ENCODE measurements at regions of chr9 and their contacts with region 1.

Region 1: DNA sequence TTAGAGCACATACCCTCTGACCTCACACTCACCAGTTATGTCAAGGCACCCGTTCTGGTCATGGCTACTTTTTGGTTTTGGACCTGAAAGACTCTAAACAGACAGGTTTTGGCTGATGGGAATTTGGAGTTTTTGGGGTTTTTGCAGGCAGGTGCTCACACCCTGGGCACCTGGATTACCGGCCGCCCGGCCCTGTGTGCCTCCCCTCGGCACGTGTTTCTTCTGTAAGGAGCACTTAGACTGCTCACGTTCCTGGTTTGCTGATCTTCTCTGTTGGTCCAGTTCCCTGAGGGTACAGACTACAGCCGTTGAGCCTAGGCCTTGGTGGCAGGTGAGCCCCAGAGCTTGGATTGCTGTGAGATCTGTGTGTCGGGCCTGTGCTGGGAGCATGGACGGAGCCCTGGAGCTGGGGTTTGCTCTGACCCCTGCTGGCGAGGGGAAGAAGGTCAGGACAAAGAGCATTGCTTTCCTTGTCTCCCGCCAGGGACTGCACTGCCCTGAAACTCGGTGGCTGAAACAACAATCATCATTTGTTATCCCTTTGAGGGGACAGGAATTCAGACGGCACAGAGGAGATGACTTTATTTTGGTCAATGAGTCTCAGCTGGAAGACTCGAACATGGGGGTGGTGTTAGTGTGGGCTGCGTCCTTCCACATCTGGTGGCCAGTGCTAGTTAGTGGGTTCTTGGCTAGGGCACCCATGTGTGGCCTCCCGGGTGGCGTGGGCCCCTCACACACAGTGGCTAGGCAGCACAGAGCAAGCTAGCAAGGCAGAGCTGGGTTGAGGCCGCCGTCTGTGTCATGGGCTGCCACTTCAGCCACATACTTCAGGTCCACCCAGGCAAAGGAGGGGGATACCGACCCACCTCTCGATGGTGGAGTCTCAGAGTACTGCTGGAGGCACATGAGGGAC is 76.4 kb downstream of the EHMT1 start:
- DNase-seq: peak; percentile 85
- ATAC-seq: peak; percentile 91
- H3K4me3 Mint-ChIP-seq: no peak overlapping the region
- H3K27ac Mint-ChIP-seq: peak overlapping the region; percentile 98
- H3K4me1 Mint-ChIP-seq: peaks cover 71% of the 10 kb centered on the region
- H3K27me3 Mint-ChIP-seq: no peaks in the 10 kb centered on the region
- CTCF ChIP-seq: peak; percentile 59

Region 2: GRCh38 chr9:137516144-137516917 is 178.9 kb before region 1 on chr9:
- CTCF ChIA-PET with region 1: no interaction called
- POLR2A ChIA-PET with region 1: no interaction called
- DNase-seq: no peak
- ATAC-seq: peak; percentile 46; the same call in 1 of the 2 replicates
- H3K4me3 Mint-ChIP-seq: no peak overlapping the region
- H3K27ac Mint-ChIP-seq: no peak overlapping the region
- H3K4me1 Mint-ChIP-seq: no peaks in the 10 kb centered on the region
- H3K27me3 Mint-ChIP-seq: no peaks in the 10 kb centered on the region
- CTCF ChIP-seq: no peak

Region 3: GRCh38 chr9:137665697-137666510 is 29.3 kb before region 1 on chr9:
- CTCF ChIA-PET with region 1: interaction called, 17 read pairs
- POLR2A ChIA-PET with region 1: interaction called, 3 read pairs
- DNase-seq: peak; percentile 66
- ATAC-seq: peak; percentile 46
- H3K4me3 Mint-ChIP-seq: peak overlapping the region; percentile 40
- H3K27ac Mint-ChIP-seq: peak overlapping the region; percentile 98
- H3K4me1 Mint-ChIP-seq: peaks cover 75% of the 10 kb centered on the region
- H3K27me3 Mint-ChIP-seq: no peaks in the 10 kb centered on the region
- CTCF ChIP-seq: no peak

Region 4: DNA sequence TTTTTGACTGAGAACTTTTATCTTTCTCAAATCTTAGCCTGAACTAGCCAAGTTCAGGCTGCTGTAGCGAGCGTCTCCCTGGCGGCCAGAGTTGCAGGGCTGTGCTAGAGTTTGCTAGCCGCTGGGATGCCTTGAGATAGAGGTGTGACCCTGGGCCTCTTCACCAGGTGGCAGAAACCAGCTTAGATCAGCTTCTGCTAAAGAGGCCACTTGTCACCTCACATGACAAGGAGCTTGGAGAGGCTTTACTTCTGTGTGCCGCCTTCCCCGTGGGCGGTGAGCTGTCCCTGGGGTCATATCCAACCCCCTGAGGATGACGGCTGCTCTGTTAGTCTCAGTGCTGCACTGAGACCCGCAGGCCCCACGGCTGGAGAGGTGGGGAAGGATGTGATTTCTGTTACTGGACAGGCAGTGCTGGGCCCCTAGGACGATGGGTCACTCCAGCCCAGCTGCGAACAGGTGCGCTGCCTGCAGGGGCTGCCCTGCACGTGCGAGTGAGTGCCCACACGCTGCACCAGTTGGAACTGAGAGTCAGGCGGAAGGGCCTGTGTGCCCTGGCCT is 12.7 kb before region 1 on chr9:
- CTCF ChIA-PET with region 1: interaction called, 49 read pairs
- POLR2A ChIA-PET with region 1: no interaction called
- DNase-seq: no peak
- ATAC-seq: peak; percentile 18
- H3K4me3 Mint-ChIP-seq: no peak overlapping the region
- H3K27ac Mint-ChIP-seq: peak overlapping the region; percentile 98
- H3K4me1 Mint-ChIP-seq: peaks cover 85% of the 10 kb centered on the region
- H3K27me3 Mint-ChIP-seq: no peaks in the 10 kb centered on the region
- CTCF ChIP-seq: no peak

Measured in WTC11 (cell line).